ENCODE measurements at regions of chr1 and their contacts with region 1.

Region 1: GRCh38 chr1:183922197-183922596 is 115.3 kb downstream of the COLGALT2 start:
- DNase-seq: no peak
- CTCF ChIP-seq: no peak

Region 2: DNA sequence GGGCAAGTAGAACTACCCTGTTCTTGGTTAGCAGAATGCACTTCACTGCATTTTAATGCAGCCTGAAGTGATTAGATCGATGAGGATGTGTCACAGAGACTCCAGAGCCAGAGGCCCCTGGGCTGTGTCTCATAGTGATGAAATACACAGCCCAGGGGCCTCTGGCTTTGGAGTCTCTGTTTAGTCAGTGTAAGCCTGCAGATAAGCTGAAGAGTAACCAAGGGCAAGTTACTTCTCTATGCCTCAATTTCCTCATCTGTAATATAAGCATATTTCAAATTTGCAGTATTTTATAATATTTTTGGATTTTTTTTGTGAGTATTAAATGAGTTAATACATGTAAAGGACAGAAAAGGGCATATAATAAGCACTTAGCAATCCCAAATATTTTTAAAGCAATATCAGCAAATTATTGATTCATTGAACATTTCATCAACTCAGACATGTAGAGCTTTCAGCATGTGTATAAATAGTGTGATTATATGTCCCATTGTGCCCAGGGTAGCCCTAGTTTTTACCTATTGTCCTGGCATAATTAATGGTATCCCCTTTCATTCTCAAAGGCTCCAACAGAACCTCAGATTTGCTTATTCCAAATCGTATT is 245.5 kb before region 1 on chr1:
- in situ Hi-C with region 1: loop called (anchors 10 kb)
- DNase-seq: no peak
- CTCF ChIP-seq: no peak

Region 3: GRCh38 chr1:183859831-183860230 is 62.4 kb before region 1 on chr1:
- in situ Hi-C with region 1: no loop called
- DNase-seq: no peak
- CTCF ChIP-seq: no peak

Region 4: GRCh38 chr1:184036517-184036949 is 114.3 kb after region 1 on chr1:
- in situ Hi-C with region 1: no loop called
- DNase-seq: peak; percentile 42
- CTCF ChIP-seq: no peak